ENCODE measurements at regions of chr5 and their contacts with region 1.

Region 1: GRCh38 chr5:129852747-129853352 is 51.4 kb upstream of the CHSY3 start:
- DNase-seq: peak; percentile 62
- ATAC-seq: peak; percentile 100
- H3K4me3 ChIP-seq: no peak overlapping the region
- H3K27ac ChIP-seq: no peak overlapping the region
- H3K4me1 ChIP-seq: peaks cover 0 to 5% of the 10 kb centered on the region in 2 experiments; a peak in 1 of 4 replicates
- H3K27me3 ChIP-seq: no peaks in the 10 kb centered on the region
- CTCF ChIP-seq: peak; percentile 85 to 97 (median 90)
- POLR2A ChIP-seq: no peak
- RAD21 ChIP-seq: peak; percentile 89

Region 2: GRCh38 chr5:129172580-129172979 is 680.3 kb before region 1 on chr5:
- CTCF ChIA-PET with region 1: no interaction called
- POLR2A ChIA-PET with region 1: no interaction called
- RAD21 ChIA-PET with region 1: no interaction called
- intact Hi-C with region 1: loop called (anchors 2 kb)
- DNase-seq: peak; percentile 12
- ATAC-seq: 0 out of 2 replicates have a peak, but pooled peaks have one; percentile 42
- H3K4me3 ChIP-seq: no peak overlapping the region
- H3K27ac ChIP-seq: no peak overlapping the region
- H3K4me1 ChIP-seq: no peaks in the 10 kb centered on the region
- H3K27me3 ChIP-seq: no peaks in the 10 kb centered on the region
- CTCF ChIP-seq: peak in 2 of 3 experiments; percentile 37 to 79; a peak in 2 of 6 replicates
- POLR2A ChIP-seq: no peak
- RAD21 ChIP-seq: peak; percentile 67

Region 3: GRCh38 chr5:129438324-129438887 is 414.4 kb before region 1 on chr5:
- CTCF ChIA-PET with region 1: no interaction called
- POLR2A ChIA-PET with region 1: no interaction called
- RAD21 ChIA-PET with region 1: no interaction called
- intact Hi-C with region 1: no loop called
- DNase-seq: no peak
- ATAC-seq: no peak
- H3K4me3 ChIP-seq: no peak overlapping the region
- H3K27ac ChIP-seq: no peak overlapping the region
- H3K4me1 ChIP-seq: no peaks in the 10 kb centered on the region
- H3K27me3 ChIP-seq: no peaks in the 10 kb centered on the region
- CTCF ChIP-seq: no peak
- POLR2A ChIP-seq: no peak
- RAD21 ChIP-seq: no peak

Region 4: DNA sequence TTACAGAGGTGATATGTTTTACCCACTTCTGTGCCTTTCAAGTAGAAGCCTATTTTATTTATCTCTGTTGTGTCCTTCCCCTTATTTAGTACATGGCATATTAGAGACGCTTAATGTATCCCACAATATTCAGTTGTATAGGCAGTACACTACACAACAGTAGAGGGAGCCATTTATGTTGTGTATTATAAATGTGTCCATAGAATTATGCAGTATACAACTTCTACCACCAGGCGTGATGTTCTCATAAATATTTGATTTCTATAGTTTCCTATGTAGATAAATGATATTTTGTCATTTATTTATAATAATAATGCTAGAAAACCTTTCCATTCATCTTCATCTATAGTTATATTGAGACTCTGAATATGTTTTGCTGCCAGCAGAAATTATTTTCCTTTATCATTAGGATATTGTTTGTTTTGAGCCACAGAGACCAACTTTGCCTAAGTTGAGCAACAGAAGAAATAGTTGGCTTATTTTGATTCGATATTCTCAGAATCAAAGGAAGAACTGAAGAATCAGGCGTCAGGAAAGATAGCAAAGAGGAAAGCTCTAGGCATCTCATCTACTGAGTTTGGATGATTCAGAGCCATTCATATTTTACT is 311.1 kb before region 1 on chr5:
- CTCF ChIA-PET with region 1: no interaction called
- POLR2A ChIA-PET with region 1: no interaction called
- RAD21 ChIA-PET with region 1: no interaction called
- intact Hi-C with region 1: loop called (anchors 10 kb)
- DNase-seq: peak; percentile 48
- ATAC-seq: peak; percentile 98
- H3K4me3 ChIP-seq: no peak overlapping the region
- H3K27ac ChIP-seq: no peak overlapping the region
- H3K4me1 ChIP-seq: no peaks in the 10 kb centered on the region
- H3K27me3 ChIP-seq: no peaks in the 10 kb centered on the region
- CTCF ChIP-seq: peak; percentile 59 to 95 (median 74)
- POLR2A ChIP-seq: no peak
- RAD21 ChIP-seq: peak; percentile 58

Region 5: GRCh38 chr5:129593525-129593924 is 259.3 kb before region 1 on chr5:
- CTCF ChIA-PET with region 1: no interaction called
- POLR2A ChIA-PET with region 1: no interaction called
- RAD21 ChIA-PET with region 1: no interaction called
- intact Hi-C with region 1: no loop called
- DNase-seq: no peak
- ATAC-seq: no peak
- H3K4me3 ChIP-seq: no peak overlapping the region
- H3K27ac ChIP-seq: no peak overlapping the region
- H3K4me1 ChIP-seq: no peaks in the 10 kb centered on the region
- H3K27me3 ChIP-seq: no peaks in the 10 kb centered on the region
- CTCF ChIP-seq: no peak
- POLR2A ChIP-seq: no peak
- RAD21 ChIP-seq: no peak

Region 6: GRCh38 chr5:130045334-130045733 is 192.5 kb after region 1 on chr5:
- CTCF ChIA-PET with region 1: no interaction called
- POLR2A ChIA-PET with region 1: no interaction called
- RAD21 ChIA-PET with region 1: no interaction called
- intact Hi-C with region 1: no loop called
- DNase-seq: no peak
- ATAC-seq: no peak
- H3K4me3 ChIP-seq: no peak overlapping the region
- H3K27ac ChIP-seq: no peak overlapping the region
- H3K4me1 ChIP-seq: no peaks in the 10 kb centered on the region
- H3K27me3 ChIP-seq: no peaks in the 10 kb centered on the region
- CTCF ChIP-seq: no peak
- POLR2A ChIP-seq: no peak
- RAD21 ChIP-seq: no peak

Measured in HCT116 (cell line).